GM12878 (cell line): ENCODE measurements at regions of chr14 and their contacts with region 1.

Region 1: GRCh38 chr14:23006544-23007419 is 3.2 kb downstream of the C14orf93 start:
- DNase-seq: peak; percentile 96
- ATAC-seq: peak; percentile 98
- H3K4me3 ChIP-seq: peak overlapping the region; percentile 71
- H3K27ac ChIP-seq: peak overlapping the region; percentile 91
- H3K4me1 ChIP-seq: peaks cover 21% of the 10 kb centered on the region
- H3K27me3 ChIP-seq: no peaks in the 10 kb centered on the region
- CTCF ChIP-seq: peak in 2 of 3 experiments; percentile 26 to 30; a peak in 3 of 6 replicates
- EP300 ChIP-seq: no peak
- POLR2A ChIP-seq: peak; percentile 99
- RAD21 ChIP-seq: no peak

Region 2: DNA sequence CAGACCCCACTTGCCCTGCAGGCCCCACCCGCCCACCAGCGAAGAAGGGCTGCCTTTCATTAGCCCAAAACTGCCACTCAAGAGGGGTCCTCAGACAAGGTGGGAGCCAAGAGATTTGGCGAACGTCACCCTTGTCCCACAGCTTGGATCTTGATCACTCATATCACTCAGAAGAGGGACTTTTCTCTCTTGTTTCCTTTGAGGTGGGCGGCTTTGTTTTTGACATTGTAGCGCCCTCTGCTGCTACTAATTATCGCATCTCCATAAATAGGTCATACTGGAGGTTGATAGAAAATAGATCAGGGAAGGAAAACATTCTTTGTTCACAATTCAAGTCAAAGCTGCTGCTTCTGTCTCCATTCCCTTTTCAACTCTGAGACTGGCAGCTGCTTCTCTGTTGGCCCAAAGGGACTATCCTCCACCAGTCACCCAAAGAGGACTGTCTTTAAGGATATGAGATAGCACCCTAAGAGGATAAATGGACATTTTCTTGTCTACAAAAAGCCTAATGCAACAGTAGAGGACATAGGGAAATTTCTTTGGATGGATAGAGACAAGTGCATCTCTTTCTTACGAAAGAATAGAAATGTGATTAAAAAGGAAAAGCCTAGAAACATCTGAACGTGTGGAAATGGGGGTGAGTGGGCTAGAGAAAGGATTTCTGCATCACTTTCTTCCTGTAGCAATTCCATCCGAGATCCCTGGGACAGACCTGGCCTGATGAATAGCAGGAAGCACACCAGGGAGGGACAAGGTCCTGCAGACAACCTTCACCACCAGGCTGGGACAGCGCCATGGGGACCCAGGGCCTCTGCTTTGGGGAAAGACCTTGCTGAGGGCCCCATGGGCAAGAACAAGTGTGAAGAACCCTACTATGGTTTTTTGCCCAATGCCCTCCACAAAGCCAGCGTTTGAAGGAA is 533.6 kb before region 1 on chr14:
- CTCF ChIA-PET with region 1: no interaction called
- POLR2A ChIA-PET with region 1: no interaction called
- RAD21 ChIA-PET with region 1: no interaction called
- SMC1A ChIA-PET with region 1: no interaction called
- in situ Hi-C with region 1: no loop called
- intact Hi-C with region 1: no loop called
- DNase-seq: no peak
- ATAC-seq: peak; percentile 67
- H3K4me3 ChIP-seq: no peak overlapping the region
- H3K27ac ChIP-seq: peak overlapping the region; percentile 49
- H3K4me1 ChIP-seq: peaks cover 50% of the 10 kb centered on the region
- H3K27me3 ChIP-seq: no peaks in the 10 kb centered on the region
- CTCF ChIP-seq: peak; percentile 59 to 72 (median 72)
- EP300 ChIP-seq: no peak
- POLR2A ChIP-seq: no peak
- RAD21 ChIP-seq: peak; percentile 96

Region 3: GRCh38 chr14:22882529-22883172 is 124.1 kb before region 1 on chr14:
- CTCF ChIA-PET with region 1: no interaction called
- POLR2A ChIA-PET with region 1: no interaction called
- RAD21 ChIA-PET with region 1: no interaction called
- SMC1A ChIA-PET with region 1: no interaction called
- in situ Hi-C with region 1: no loop called
- intact Hi-C with region 1: no loop called
- DNase-seq: no peak
- ATAC-seq: no peak
- H3K4me3 ChIP-seq: no peak overlapping the region
- H3K27ac ChIP-seq: no peak overlapping the region
- H3K4me1 ChIP-seq: peaks cover 17% of the 10 kb centered on the region
- H3K27me3 ChIP-seq: no peaks in the 10 kb centered on the region
- CTCF ChIP-seq: no peak
- EP300 ChIP-seq: no peak
- POLR2A ChIP-seq: no peak
- RAD21 ChIP-seq: no peak

Region 4: GRCh38 chr14:22955702-22956569 is 50.8 kb before region 1 on chr14:
- CTCF ChIA-PET with region 1: interaction called, 9 read pairs
- POLR2A ChIA-PET with region 1: interaction called, 3 read pairs
- RAD21 ChIA-PET with region 1: interaction called, 3 read pairs
- SMC1A ChIA-PET with region 1: interaction called, 10 read pairs
- in situ Hi-C with region 1: no loop called
- intact Hi-C with region 1: no loop called
- DNase-seq: no peak
- ATAC-seq: no peak
- H3K4me3 ChIP-seq: peak overlapping the region; percentile 85
- H3K27ac ChIP-seq: peak overlapping the region; percentile 90
- H3K4me1 ChIP-seq: no peaks in the 10 kb centered on the region
- H3K27me3 ChIP-seq: no peaks in the 10 kb centered on the region
- CTCF ChIP-seq: no peak
- EP300 ChIP-seq: no peak
- POLR2A ChIP-seq: no peak
- RAD21 ChIP-seq: no peak

Region 5: DNA sequence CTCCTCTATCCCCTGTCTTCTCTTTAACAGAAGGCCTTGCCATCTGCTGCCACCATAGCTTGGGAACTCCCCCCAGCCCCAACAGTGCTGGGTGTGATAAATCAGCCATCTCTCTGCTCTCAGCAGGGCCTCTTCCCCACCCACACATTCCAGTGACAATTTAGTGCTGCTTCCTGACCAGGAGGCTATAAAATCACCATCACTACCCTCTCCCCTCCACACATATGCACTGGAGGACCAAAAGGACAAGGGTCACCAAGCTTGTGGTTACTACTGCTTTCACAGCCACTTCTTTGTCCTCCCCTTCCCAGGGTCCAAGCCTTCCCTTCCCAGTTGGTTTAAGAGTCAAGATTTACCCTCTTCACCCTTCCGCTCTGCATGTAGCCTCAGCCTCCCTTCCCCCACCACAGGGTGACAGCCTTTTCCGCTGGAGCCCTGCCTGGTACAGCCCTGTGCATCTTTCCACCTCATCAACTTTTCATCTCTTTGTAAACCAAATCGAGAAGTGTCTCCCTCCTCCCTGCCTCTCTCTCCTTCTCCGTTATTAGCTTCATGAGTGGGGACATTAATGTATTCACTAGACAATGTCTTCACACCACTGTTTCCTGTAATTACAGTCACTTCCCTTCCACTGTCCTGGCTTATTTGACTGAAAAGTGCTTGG is 18.5 kb after region 1 on chr14:
- CTCF ChIA-PET with region 1: interaction called, 16 read pairs
- POLR2A ChIA-PET with region 1: interaction called, 12 read pairs
- RAD21 ChIA-PET with region 1: interaction called, 5 read pairs
- SMC1A ChIA-PET with region 1: interaction called, 10 read pairs
- in situ Hi-C with region 1: no loop called
- intact Hi-C with region 1: no loop called
- DNase-seq: no peak
- ATAC-seq: peak; percentile 52; the same call in 2 of the 3 replicates
- H3K4me3 ChIP-seq: no peak overlapping the region
- H3K27ac ChIP-seq: no peak overlapping the region
- H3K4me1 ChIP-seq: no peaks in the 10 kb centered on the region
- H3K27me3 ChIP-seq: no peaks in the 10 kb centered on the region
- CTCF ChIP-seq: no peak
- EP300 ChIP-seq: no peak
- POLR2A ChIP-seq: no peak
- RAD21 ChIP-seq: no peak

Region 6: DNA sequence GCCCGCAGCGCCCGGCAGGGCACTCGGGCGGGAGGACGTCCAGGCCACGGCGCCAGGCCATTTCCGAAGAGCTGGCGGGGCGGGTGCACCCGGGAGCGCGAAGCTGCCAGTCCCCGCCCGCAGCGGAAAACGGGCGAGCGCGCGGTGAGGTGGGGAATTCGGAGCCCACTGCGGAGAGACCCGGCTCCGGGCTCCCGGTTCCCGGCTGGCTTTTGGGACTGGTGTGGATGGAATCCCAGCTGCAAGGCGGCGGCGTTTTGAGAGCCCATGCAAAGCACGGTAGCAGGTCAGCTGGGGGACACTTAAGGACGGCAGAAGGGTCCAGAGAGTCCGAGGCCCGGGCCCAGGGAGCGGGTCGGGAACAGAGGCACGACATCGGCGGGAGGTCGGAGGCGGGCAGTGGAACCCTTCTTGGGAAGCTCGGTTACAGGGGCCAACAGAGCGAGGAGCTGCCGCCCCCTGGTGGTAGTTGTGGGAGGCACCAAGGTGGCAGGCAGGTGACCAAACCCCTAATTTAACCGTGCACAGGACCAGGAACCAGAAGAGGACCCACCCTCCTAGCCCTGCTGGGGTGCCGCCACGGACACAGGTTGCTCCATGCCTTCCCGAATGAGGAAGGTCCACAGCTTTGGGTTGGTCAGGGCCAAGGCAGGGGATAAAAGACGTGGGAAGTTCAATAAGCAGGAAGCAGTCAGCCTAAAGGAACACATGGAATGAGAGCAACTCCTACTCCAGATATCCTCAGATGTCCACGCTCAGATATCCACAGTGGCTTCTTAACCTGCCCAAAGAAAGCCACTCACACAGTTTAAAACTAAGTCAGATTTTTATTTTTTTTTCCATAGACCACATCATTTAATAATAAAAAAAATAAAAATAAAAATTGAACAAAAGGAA is 51.2 kb after region 1 on chr14:
- CTCF ChIA-PET with region 1: interaction called, 853 read pairs
- POLR2A ChIA-PET with region 1: interaction called, 8 read pairs
- RAD21 ChIA-PET with region 1: interaction called, 13 read pairs
- SMC1A ChIA-PET with region 1: interaction called, 10 read pairs
- in situ Hi-C with region 1: no loop called
- intact Hi-C with region 1: no loop called
- DNase-seq: peak; percentile 40
- ATAC-seq: peak; percentile 82
- H3K4me3 ChIP-seq: peak overlapping the region; percentile 79
- H3K27ac ChIP-seq: no peak overlapping the region
- H3K4me1 ChIP-seq: peaks cover 12% of the 10 kb centered on the region
- H3K27me3 ChIP-seq: no peaks in the 10 kb centered on the region
- CTCF ChIP-seq: peak; percentile 92 to 97 (median 96); a peak in 5 of 6 replicates
- EP300 ChIP-seq: no peak
- POLR2A ChIP-seq: peak; percentile 74
- RAD21 ChIP-seq: peak; percentile 78

Region 7: DNA sequence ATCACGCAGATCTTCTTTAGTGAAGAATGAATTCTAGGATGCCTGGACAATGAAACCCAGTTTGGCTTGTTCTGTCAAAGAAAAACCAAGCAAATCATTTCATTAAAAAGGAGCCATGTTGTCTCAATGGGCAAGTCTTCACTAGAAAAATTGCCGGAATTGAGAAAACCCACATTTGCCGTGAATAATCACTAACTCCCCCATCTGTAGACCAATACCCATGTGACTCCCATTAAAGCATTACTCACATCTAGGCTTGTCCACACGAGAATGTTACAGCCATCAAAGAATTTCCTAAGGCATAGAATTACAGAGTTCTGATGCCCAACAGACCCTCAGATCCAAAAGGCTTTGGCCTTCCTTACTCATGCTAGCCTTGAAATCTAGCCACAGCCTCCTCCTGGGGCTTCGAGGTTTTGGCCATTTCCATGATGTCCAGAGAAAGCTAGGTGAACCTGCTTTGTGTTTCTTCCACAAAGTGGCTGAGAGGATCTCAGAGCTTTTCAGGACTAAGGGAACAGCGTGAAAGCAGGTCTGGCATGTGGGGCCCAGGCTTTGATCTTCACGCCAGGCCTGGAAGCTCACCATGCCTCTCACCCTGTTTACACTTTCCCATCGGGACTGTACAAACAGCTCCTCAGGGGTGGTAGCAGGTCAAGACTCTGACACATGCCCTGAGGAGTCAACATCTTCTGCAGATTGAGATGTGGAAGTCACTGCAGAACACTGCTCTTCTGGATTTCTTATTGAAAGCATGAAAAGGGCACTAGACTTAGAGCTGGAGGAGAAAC is 164.6 kb after region 1 on chr14:
- CTCF ChIA-PET with region 1: no interaction called
- POLR2A ChIA-PET with region 1: no interaction called
- RAD21 ChIA-PET with region 1: no interaction called
- SMC1A ChIA-PET with region 1: no interaction called
- in situ Hi-C with region 1: no loop called
- intact Hi-C with region 1: no loop called
- DNase-seq: no peak
- ATAC-seq: no peak
- H3K4me3 ChIP-seq: no peak overlapping the region
- H3K27ac ChIP-seq: no peak overlapping the region
- H3K4me1 ChIP-seq: no peaks in the 10 kb centered on the region
- H3K27me3 ChIP-seq: peaks cover 0 to 3% of the 10 kb centered on the region in 2 experiments; a peak in 2 of 4 replicates
- CTCF ChIP-seq: no peak
- EP300 ChIP-seq: no peak
- POLR2A ChIP-seq: no peak
- RAD21 ChIP-seq: no peak

Region 8: DNA sequence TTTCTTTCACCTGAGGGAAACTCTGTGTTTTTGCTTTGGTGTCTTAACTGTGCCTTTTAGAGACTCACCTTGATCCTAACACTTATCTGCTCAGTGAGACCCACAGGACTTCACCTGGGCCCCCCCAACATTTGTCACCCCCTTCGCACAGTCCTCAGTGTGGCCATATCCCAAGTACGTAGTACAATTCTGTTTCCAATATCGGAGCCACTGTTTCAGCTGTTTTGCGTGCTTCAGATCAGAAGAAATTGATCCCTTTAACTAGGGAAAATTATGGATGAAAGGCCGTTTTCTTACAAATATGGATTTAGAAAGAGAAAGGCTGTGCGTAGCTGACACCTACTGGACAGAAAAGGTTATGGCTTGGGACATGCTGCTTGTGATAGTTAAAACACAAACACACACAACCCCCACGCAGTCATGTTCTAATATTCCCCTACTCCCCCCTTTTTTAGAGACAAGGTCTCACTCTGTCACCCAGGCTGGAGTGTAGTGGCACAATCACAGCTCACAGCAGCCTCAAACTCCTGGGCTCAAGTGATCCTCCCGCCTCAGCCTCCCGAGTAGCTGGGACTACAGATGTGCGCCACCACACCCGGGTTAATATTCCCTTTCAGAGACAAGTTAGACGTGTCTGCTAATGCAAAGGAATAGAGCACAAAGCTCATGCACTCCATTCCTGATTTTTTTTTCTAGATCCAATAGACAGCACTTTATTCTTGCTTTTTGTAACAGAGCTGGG is 180.3 kb after region 1 on chr14:
- CTCF ChIA-PET with region 1: no interaction called
- POLR2A ChIA-PET with region 1: no interaction called
- RAD21 ChIA-PET with region 1: no interaction called
- SMC1A ChIA-PET with region 1: no interaction called
- in situ Hi-C with region 1: no loop called
- intact Hi-C with region 1: no loop called
- DNase-seq: peak; percentile 5
- ATAC-seq: peak; percentile 73
- H3K4me3 ChIP-seq: no peak overlapping the region
- H3K27ac ChIP-seq: no peak overlapping the region
- H3K4me1 ChIP-seq: peaks cover 7% of the 10 kb centered on the region; the same call in 1 of the 2 replicates
- H3K27me3 ChIP-seq: peaks cover 1 to 5% of the 10 kb centered on the region in 2 experiments; a peak in 3 of 4 replicates
- CTCF ChIP-seq: peak; percentile 58 to 67 (median 66)
- EP300 ChIP-seq: no peak
- POLR2A ChIP-seq: no peak
- RAD21 ChIP-seq: peak; percentile 71